ENCODE measurements at regions of chr15 and their contacts with region 1.

Region 1: DNA sequence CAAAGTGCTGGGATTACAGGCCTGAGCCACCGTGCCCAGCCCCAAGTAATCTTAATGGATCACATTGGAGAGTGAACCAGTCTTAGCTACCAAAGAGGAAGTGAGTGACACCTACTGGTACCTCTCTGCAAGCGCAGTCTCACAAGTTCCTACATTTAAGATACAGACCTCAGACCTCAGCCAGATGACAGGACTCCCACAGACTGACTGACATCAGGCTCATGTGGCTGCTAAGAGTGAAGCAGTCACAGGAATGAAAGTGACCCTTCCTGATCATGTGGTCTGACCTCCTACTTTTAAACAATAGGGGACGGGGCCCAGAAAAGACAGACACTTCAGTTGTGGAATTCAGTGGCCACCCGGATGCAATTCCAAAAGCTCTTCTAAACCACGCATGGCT is 36.3 kb upstream of the GNB5 start:
- DNase-seq: peak; percentile 87 to 93
- ATAC-seq: peak; percentile 98
- H3K4me3 ChIP-seq: no peak overlapping the region
- H3K27ac ChIP-seq: no peak overlapping the region
- H3K4me1 ChIP-seq: 0 out of 3 replicates have a peak, but pooled peaks cover 4% of the 10 kb centered on the region
- CTCF ChIP-seq: peak; percentile 68
- EP300 ChIP-seq: no peak
- POLR2A ChIP-seq: no peak
- RAD21 ChIP-seq: peak; percentile 71 to 74

Region 2: GRCh38 chr15:51681303-51681963 is 546.0 kb before region 1 on chr15 and contains the start of gene SCG3:
- CTCF ChIA-PET with region 1: no interaction called
- POLR2A ChIA-PET with region 1: no interaction called
- DNase-seq: peak; percentile 25 to 74
- ATAC-seq: peak; percentile 93 to 95
- H3K4me3 ChIP-seq: peak within 1 kb of the TSS; percentile 23; the same call in 1 of the 3 replicates
- H3K27ac ChIP-seq: no peak within 1 kb of the TSS
- H3K4me1 ChIP-seq: no peaks in the 10 kb centered on the region; the same call in 2 of the 3 replicates
- CTCF ChIP-seq: no peak
- EP300 ChIP-seq: no peak
- POLR2A ChIP-seq: no peak
- RAD21 ChIP-seq: no peak
- polyA plus RNA-seq, gene SCG3: 0.03 TPM in 1 of 2 replicates, not detected in the other

Region 3: GRCh38 chr15:51971375-51972133 is 255.9 kb before region 1 on chr15 and contains the start of gene LEO1:
- CTCF ChIA-PET with region 1: interaction called, 18 read pairs
- POLR2A ChIA-PET with region 1: interaction called, 4 read pairs
- DNase-seq: peak; percentile 99
- ATAC-seq: peak; percentile 94 to 98
- H3K4me3 ChIP-seq: peak within 1 kb of the TSS; percentile 68
- H3K27ac ChIP-seq: peak within 1 kb of the TSS; percentile 83 to 95
- H3K4me1 ChIP-seq: peaks cover 13% of the 10 kb centered on the region
- CTCF ChIP-seq: peak; percentile 51
- EP300 ChIP-seq: no peak
- POLR2A ChIP-seq: peak; percentile 93
- RAD21 ChIP-seq: peak in 1 of 2 experiments; percentile 32; a peak in 1 of 5 replicates
- polyA plus RNA-seq, gene LEO1: 19.2 and 22.3 TPM in 2 replicates

Region 4: GRCh38 chr15:52039925-52040781 is 187.3 kb before region 1 on chr15:
- CTCF ChIA-PET with region 1: no interaction called
- POLR2A ChIA-PET with region 1: no interaction called
- DNase-seq: no peak
- ATAC-seq: peak; percentile 36 to 55; a peak in 4 of 6 replicates
- H3K4me3 ChIP-seq: no peak overlapping the region
- H3K27ac ChIP-seq: no peak overlapping the region
- H3K4me1 ChIP-seq: peaks cover 61% of the 10 kb centered on the region
- CTCF ChIP-seq: no peak
- EP300 ChIP-seq: no peak
- POLR2A ChIP-seq: no peak
- RAD21 ChIP-seq: no peak

Region 5: DNA sequence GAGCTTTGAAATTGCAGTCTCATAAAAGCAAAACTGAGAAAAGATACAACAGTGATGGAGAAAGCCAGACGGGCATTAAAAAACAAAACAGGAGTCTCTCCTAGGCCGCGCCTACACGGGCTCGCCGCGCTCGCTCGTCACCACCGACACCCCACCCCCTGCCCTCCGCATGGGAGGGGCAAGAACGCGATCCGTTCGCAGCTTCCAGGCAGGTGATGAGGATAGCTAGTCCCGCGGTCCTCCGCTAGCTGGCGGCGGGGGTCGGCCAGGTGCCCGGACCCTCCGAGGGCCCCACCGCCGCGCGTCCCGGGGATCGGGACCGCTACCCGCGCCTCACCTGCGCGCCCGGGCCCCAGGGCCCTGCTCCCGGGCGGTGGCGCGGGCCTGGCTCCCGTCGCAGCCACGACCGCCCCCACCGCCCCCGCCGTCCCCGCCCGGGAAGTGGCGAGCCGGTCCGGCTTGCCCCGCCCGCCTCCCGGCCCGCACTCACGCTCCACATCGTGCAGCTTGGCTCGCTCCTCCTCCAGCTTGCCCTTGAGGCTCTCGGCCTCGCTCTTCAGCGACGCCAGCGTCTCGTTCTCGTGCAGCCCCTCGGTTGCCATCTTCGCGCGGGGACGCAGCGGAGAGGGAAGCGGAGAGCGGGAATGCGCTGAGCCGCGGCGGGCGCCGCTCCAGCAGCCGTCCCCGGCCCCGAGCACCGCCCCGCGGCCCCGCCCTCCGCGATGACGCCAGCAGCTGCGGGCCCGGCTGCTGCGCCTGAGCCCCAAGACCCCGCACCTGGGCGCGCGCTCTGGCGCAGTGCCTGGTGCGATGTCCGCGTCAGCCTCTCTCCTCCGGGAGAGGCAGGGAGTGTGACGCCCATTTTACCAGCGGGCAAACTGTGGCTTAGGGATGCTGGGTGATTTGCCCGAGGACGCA is 47.9 kb before region 1 on chr15:
- CTCF ChIA-PET with region 1: interaction called, 29 read pairs
- POLR2A ChIA-PET with region 1: interaction called, 4 read pairs
- DNase-seq: peak; percentile 90 to 98
- ATAC-seq: peak; percentile 90 to 92
- H3K4me3 ChIP-seq: peak overlapping the region; percentile 68
- H3K27ac ChIP-seq: peak overlapping the region; percentile 92 to 97
- H3K4me1 ChIP-seq: peaks cover 12% of the 10 kb centered on the region
- CTCF ChIP-seq: peak; percentile 15; the same call in 1 of the 3 replicates
- EP300 ChIP-seq: no peak
- POLR2A ChIP-seq: peak; percentile 90
- RAD21 ChIP-seq: no peak; a peak in 1 of 5 replicates

Region 6: DNA sequence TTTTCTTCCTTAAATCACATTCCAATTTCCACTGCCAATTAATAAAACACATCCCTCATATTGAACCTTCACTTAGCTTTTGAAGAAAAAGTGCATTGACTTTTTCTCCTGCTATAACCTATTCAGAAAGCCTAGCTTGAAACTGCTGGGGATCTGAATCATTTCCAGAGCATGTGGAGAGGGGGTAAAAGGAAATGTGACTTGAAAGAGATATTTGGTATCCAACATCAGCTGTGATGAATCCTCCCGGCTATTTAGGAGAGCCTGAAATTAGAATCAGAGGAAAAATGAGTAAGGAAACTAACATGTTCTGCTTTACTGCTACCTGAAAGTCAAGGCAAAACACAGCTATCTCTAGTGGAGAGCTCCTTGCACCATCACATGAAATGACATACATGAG is 33.7 kb before region 1 on chr15:
- CTCF ChIA-PET with region 1: interaction called, 15 read pairs
- POLR2A ChIA-PET with region 1: no interaction called
- DNase-seq: no peak
- ATAC-seq: no peak
- H3K4me3 ChIP-seq: no peak overlapping the region
- H3K27ac ChIP-seq: no peak overlapping the region
- H3K4me1 ChIP-seq: no peaks in the 10 kb centered on the region
- CTCF ChIP-seq: no peak
- EP300 ChIP-seq: no peak
- POLR2A ChIP-seq: no peak
- RAD21 ChIP-seq: no peak

Region 7: DNA sequence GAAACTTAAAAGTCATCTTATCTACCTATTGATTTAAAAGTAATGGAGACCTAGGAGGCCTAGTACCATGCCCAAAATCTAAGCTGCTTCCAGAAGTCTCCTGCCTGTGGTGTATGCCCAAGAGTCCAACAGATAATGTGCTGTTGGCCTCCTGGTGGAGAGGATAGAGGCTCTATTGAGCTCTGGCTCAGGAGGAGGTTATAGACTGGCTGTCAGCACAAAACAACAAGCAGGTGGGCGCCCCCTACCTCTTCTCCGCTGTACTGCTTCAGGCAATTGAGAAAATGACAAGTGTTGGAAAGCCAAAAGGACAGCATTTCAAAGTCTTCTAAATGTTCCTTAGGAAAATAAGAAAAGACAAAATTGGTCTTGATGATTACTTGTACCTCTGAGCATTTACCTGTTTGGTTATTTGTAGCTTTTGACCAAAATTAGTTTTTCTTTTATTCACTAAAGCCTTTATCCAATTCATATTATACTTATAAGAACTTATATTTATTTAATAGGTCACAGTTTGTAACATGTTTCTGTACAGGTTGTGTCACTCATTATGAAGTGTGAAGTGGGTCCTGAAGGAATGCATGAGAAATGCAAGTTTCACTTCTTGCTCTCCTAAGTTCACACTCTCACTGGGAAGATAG is 19.0 kb before region 1 on chr15:
- CTCF ChIA-PET with region 1: interaction called, 67 read pairs
- POLR2A ChIA-PET with region 1: no interaction called
- DNase-seq: peak; percentile 81
- ATAC-seq: peak; percentile 91 to 98
- H3K4me3 ChIP-seq: no peak overlapping the region
- H3K27ac ChIP-seq: no peak overlapping the region
- H3K4me1 ChIP-seq: no peaks in the 10 kb centered on the region
- CTCF ChIP-seq: peak; percentile 86
- EP300 ChIP-seq: no peak
- POLR2A ChIP-seq: no peak
- RAD21 ChIP-seq: peak; percentile 62 to 78

Region 8: GRCh38 chr15:52246686-52247431 is 19.4 kb after region 1 on chr15:
- CTCF ChIA-PET with region 1: interaction called, 90 read pairs
- POLR2A ChIA-PET with region 1: no interaction called
- DNase-seq: no peak
- ATAC-seq: no peak
- H3K4me3 ChIP-seq: no peak overlapping the region
- H3K27ac ChIP-seq: no peak overlapping the region
- H3K4me1 ChIP-seq: peaks cover 19% of the 10 kb centered on the region
- CTCF ChIP-seq: no peak
- EP300 ChIP-seq: no peak
- POLR2A ChIP-seq: no peak
- RAD21 ChIP-seq: no peak

Measured in A549 (cell line).